ENCODE measurements at regions of chr17 and their contacts with region 1.

Region 1: DNA sequence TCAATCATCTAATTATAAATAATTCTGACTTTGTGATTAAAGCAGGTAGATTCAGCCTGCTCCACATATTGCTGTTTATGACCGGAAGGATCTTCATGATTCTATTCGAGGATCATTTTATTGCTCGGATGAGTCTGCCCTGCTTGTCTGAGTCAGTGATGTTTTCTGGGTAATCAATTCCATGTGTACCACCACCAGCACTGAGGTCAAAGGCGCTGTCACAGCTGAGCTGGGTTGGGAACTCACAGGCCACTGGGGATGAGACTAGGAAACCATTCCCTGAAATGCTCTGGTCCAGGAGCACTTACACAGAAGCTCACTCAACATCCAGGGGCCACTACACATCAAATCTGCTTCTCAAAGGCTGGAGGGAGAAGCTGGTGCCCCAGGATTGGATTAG is 30.4 kb upstream of the ERN1 start:
- DNase-seq: no peak
- ATAC-seq: no peak

Region 2: GRCh38 chr17:64229815-64230794 is 69.7 kb after region 1 on chr17:
- intact Hi-C with region 1: loop called (anchors 5 kb)
- DNase-seq: no peak
- ATAC-seq: peak; percentile 15

Measured in left ventricle myocardium superior (tissue), 1 donor.